MCF 10A (cell line): ENCODE measurements at regions of chrX and their contacts with region 1.

Region 1: GRCh38 chrX:18410043-18410442 is 15.4 kb upstream of the CDKL5 start:
- DNase-seq: peak; percentile 55
- H3K4me3 Mint-ChIP-seq: no peak overlapping the region
- H3K27ac Mint-ChIP-seq: no peak overlapping the region
- H3K4me1 Mint-ChIP-seq: no peaks in the 10 kb centered on the region
- H3K27me3 Mint-ChIP-seq: no peaks in the 10 kb centered on the region
- CTCF ChIP-seq: peak; percentile 44

Region 2: GRCh38 chrX:17812763-17813162 is 597.3 kb before region 1 on chrX:
- CTCF ChIA-PET with region 1: no interaction called
- POLR2A ChIA-PET with region 1: no interaction called
- intact Hi-C with region 1: no loop called
- DNase-seq: peak; percentile 13
- H3K4me3 Mint-ChIP-seq: no peak overlapping the region
- H3K27ac Mint-ChIP-seq: no peak overlapping the region
- H3K4me1 Mint-ChIP-seq: no peaks in the 10 kb centered on the region
- H3K27me3 Mint-ChIP-seq: no peaks in the 10 kb centered on the region
- CTCF ChIP-seq: peak; percentile 28

Region 3: GRCh38 chrX:18471296-18471695 is 61.3 kb after region 1 on chrX:
- CTCF ChIA-PET with region 1: no interaction called
- POLR2A ChIA-PET with region 1: no interaction called
- intact Hi-C with region 1: no loop called
- DNase-seq: no peak
- H3K4me3 Mint-ChIP-seq: no peak overlapping the region
- H3K27ac Mint-ChIP-seq: no peak overlapping the region
- H3K4me1 Mint-ChIP-seq: no peaks in the 10 kb centered on the region
- H3K27me3 Mint-ChIP-seq: no peaks in the 10 kb centered on the region
- CTCF ChIP-seq: no peak

Region 4: DNA sequence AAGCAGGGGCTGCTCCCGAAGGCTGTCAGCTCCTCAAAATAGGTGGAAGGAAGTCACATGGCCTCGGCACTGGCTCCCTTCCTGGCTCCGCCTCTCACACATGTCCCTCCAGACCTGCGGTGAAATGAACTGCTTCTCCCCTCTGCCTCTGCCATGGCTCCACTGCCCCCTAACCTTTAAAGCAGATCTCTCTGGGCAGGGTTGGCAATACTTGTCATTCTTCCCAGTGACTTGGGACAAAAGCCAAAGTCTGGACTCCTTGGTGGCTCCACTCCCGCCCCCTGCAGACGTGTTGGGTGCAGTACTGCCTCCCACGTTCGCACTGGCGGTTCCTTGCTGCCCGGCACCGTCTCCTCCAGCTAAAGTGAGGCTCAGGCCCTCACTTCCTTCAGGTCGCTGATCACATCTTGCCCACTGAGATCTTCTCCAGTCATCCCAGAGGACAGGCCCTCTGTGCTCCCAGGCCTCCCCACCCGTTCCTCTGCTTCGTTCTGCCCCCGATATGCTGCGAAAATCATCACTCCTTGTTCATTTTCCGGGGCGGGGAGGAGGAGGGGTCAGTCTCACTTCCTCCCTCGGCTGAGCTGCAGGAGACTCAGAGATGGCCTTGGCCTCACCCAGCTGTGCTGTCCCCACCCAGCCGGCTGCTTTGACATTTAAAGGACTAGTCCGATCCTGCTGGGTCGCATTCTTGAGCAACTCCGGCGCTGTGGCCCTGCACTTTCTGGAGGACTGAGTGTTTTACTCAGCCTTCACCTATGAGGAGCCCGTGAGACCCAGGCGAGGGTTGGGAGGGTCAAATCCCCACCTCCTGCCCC is 476.5 kb after region 1 on chrX:
- CTCF ChIA-PET with region 1: interaction called, 18 read pairs
- POLR2A ChIA-PET with region 1: interaction called, 6 read pairs
- intact Hi-C with region 1: loop called (anchors 1 kb)
- DNase-seq: peak; percentile 76
- H3K4me3 Mint-ChIP-seq: peak overlapping the region; percentile 85
- H3K27ac Mint-ChIP-seq: peak overlapping the region; percentile 97
- H3K4me1 Mint-ChIP-seq: peaks cover 24% of the 10 kb centered on the region
- H3K27me3 Mint-ChIP-seq: no peaks in the 10 kb centered on the region
- CTCF ChIP-seq: peak; percentile 39

Region 5: DNA sequence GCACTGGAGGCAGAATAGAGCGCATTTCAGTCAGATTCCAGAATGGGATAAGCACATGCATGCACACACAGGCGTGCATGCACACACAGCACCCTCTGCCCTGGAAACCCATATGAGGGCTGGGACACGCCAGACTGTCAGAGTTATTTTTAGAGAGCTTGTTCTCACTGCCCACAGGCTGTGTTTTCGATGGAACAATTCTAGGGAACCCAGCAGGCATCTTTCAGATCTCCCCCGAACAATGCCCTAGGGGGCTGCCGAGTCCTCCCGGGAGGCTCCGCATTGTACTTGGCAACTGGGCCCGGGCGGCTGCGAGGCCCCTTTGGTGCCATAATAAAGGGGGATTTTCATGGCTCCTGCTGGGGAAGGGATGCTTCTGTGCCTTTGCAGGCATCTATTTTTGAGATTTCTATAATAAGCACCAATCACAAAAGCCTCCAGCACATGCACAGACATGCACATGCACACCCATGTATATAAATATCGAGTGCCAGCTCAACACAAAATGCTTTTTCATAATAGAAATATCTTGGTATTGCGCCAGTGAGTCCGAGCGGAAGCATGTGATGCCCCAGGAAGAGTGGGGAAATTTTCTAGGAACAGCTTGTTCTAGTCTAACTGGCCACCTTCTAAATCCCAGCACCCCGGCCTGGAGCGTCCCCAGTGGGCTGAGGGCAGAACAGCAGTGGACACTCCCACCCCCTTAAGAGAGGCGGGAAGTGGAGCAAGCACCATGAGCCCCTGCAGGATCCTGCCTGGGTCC is 485.3 kb after region 1 on chrX:
- CTCF ChIA-PET with region 1: interaction called, 11 read pairs
- POLR2A ChIA-PET with region 1: interaction called, 5 read pairs
- intact Hi-C with region 1: loop called (anchors 2 kb)
- DNase-seq: peak; percentile 87
- H3K4me3 Mint-ChIP-seq: no peak overlapping the region
- H3K27ac Mint-ChIP-seq: peak overlapping the region; percentile 85
- H3K4me1 Mint-ChIP-seq: no peaks in the 10 kb centered on the region
- H3K27me3 Mint-ChIP-seq: no peaks in the 10 kb centered on the region
- CTCF ChIP-seq: peak; percentile 37

Region 6: DNA sequence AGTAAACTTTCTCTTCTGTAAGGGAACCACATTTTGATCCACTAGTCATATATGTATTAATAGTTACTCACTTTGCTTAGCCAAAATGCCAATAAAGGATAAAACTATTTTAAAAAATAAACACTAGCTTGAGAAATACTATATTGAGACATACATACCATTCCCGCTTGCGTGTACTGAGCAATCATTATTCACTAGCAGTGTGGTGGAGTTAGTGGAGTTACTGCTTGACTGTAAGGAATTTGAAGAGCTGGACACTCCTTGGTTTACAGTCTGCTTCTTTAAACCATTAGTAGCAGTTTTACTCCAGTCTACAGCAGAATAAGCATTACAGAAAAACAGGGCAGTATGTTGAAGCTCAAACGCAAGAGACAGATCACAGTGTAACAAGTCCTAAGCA is 584.7 kb after region 1 on chrX:
- CTCF ChIA-PET with region 1: interaction called, 3 read pairs
- POLR2A ChIA-PET with region 1: interaction called, 3 read pairs
- intact Hi-C with region 1: loop called (anchors 10 kb)
- DNase-seq: peak; percentile 51
- H3K4me3 Mint-ChIP-seq: peak overlapping the region; percentile 2
- H3K27ac Mint-ChIP-seq: peak overlapping the region; percentile 70
- H3K4me1 Mint-ChIP-seq: peaks cover 7% of the 10 kb centered on the region
- H3K27me3 Mint-ChIP-seq: no peaks in the 10 kb centered on the region
- CTCF ChIP-seq: no peak